ENCODE measurements at regions of chr17 and their contacts with region 1.

Region 1: GRCh38 chr17:57243171-57243948 is 13.0 kb upstream of the MSI2 start:
- DNase-seq: peak; percentile 58 to 72
- H3K4me3 ChIP-seq: no peak overlapping the region
- H3K27ac ChIP-seq: no peak overlapping the region
- H3K4me1 ChIP-seq: peaks cover 0 to 14% of the 10 kb centered on the region in 2 donors
- H3K27me3 ChIP-seq: no peaks in the 10 kb centered on the region
- CTCF ChIP-seq: peak; percentile 87 to 100 (median 99)
- POLR2A ChIP-seq: no peak

Region 2: GRCh38 chr17:57552114-57552624 is 308.8 kb after region 1 on chr17:
- intact Hi-C with region 1: loop called (anchors 10 kb)
- DNase-seq: peak; percentile 57 to 66
- H3K4me3 ChIP-seq: no peak overlapping the region
- H3K27ac ChIP-seq: no peak overlapping the region
- H3K4me1 ChIP-seq: peaks cover 10 to 31% of the 10 kb centered on the region in 2 donors
- H3K27me3 ChIP-seq: no peaks in the 10 kb centered on the region
- CTCF ChIP-seq: peak in 5 of 6 experiments; percentile 24 to 73 (median 46)
- POLR2A ChIP-seq: no peak

Region 3: DNA sequence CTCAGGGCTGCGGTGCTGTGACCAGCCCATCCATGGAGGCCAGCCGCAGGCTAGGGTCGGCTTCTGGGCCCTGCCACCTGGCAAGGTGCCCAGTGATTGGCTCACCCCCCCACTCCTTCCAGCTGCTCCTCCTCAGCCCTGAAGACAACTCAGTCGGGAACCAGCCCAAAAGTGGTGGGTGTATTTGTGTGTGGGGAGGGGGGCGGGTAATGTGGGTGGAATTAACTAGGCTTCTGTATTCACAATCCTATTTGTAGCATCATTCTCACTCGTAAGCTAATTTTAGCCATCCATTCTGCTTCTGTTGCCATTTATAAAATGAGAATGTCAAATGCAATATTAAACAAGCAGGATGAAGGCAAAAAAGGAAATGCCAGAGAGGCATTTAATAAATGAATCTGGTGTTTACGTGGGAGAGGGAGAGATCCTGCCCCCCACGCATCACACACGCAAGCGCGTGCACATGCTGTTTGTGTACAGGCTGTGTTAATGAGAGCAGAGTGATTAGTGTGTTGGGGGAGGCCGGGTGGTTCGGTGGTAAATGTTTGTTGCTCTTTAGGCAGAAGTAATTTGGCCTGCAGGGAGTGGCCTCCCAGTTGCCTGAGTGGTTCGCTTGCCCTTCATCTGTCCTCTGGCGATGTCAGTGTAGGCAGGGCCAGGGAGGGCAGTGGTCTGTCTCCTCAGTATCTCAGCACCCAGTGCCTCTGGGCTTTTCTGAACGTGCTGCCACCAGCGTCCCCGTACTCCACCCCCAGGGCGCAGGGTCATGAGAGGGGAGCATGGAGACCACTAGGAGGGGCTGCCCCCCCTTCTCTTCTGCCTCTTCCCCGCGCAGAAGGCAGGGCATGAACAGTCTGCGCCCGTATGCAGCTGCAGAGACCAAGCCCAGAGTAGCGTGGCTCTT is 361.7 kb after region 1 on chr17:
- intact Hi-C with region 1: loop called (anchors 10 kb)
- DNase-seq: peak; percentile 74 to 76
- H3K4me3 ChIP-seq: no peak overlapping the region
- H3K27ac ChIP-seq: peak overlapping the region; percentile 74 to 80 (median 76)
- H3K4me1 ChIP-seq: peaks cover 16 to 35% of the 10 kb centered on the region in 2 donors
- H3K27me3 ChIP-seq: no peaks in the 10 kb centered on the region
- CTCF ChIP-seq: no peak
- POLR2A ChIP-seq: no peak

Region 4: GRCh38 chr17:57671667-57672632 is 428.6 kb after region 1 on chr17:
- intact Hi-C with region 1: loop called (anchors 5 kb)
- DNase-seq: peak; percentile 75 to 80
- H3K4me3 ChIP-seq: no peak overlapping the region
- H3K27ac ChIP-seq: no peak overlapping the region
- H3K4me1 ChIP-seq: peaks cover 0 to 4% of the 10 kb centered on the region in 2 donors
- H3K27me3 ChIP-seq: no peaks in the 10 kb centered on the region
- CTCF ChIP-seq: peak; percentile 86 to 96 (median 87)
- POLR2A ChIP-seq: no peak

Region 5: DNA sequence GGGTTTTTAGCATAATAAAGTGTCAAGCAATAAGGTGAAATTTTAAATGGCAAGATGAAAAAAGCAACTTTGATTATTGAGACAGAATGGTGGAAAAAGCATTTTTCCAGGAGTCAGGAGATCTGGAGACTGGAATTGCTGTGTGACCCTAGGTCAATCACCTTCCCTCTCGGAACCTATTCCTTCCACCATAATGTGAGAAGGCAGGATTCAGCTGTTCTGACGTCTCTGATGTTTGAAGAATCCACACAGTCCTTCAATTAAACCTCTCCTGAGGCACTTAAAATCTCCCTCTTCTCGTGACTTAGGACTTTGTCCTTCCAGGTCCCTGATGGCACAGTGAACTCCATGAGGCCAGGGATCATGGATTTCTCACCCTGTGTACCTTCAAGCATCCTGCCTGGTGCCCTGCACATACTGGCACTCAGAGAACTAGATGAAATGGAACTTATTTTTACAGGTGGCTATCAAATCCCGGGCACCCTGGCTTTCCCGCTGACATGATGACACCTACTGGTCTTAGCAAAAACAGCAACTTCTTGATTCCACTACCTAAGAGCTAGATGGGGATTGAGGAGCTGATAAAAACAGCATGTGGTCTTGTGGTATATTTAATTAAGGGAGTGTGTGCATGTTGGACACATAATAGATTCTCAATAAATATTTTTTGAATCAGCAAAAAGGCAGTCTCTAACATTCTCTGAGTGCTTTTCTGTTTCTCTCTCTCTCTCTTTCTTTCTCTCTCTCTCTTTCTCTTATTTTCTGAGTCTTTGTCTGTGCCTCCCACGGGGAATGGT is 504.1 kb after region 1 on chr17:
- intact Hi-C with region 1: loop called (anchors 10 kb)
- DNase-seq: peak; percentile 52 to 56
- H3K4me3 ChIP-seq: no peak overlapping the region
- H3K27ac ChIP-seq: no peak overlapping the region
- H3K4me1 ChIP-seq: no peaks in the 10 kb centered on the region
- H3K27me3 ChIP-seq: no peaks in the 10 kb centered on the region
- CTCF ChIP-seq: peak; percentile 43 to 80 (median 74)
- POLR2A ChIP-seq: no peak

Measured in thyroid gland (tissue), 4 donors.